BJ (cell line): ENCODE measurements at regions of chr4 and their contacts with region 1.

Region 1: DNA sequence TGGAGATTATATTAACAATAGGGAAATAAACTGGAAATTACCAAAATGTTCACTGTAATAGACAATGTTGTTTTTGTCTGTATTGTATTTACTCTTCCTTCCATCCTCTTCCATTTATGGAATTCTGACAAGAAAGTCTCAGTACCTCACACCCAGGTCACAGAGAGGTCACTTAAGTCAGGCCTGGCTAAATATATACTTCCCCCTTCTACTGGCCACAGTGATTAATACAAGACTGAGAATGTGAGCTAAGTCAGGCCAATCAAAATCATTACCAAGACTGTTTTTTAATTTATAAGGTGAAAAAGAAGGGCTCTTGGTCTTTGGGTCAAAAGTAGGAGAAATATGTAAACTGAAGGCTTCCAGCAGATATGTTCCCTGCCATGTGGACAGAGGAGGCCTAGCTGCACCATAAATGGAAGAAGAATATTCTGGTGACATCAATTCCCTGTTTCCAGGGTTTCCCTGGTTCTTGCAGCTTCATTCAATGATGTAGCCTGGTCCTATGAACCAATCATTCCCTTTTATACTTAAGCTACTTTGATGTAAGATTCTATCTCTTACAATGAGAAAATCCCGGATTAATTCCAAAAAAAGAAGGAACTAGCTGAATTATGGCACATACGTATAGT is 64.3 kb downstream of the LRBA start:
- DNase-seq: no peak
- H3K4me3 ChIP-seq: no peak overlapping the region
- H3K27me3 ChIP-seq: no peaks in the 10 kb centered on the region
- CTCF ChIP-seq: no peak

Region 2: DNA sequence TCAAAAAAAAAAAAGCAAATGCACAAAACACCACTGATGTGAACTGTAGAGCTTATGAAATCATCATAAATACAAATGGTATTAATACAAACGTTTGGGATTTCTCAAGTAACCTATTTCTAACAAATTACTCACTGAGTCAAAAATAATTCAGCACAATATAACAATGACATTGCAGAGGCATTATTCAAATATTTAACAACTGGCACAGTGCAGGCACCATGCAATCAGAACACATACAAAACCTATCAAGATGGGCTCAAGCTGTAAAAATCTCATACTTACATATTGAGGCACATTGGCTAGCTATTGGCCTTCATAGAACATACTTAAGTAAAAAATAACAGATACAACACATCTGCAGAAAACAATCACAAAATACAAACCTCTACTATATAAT is 16.8 kb before region 1 on chr4:
- CTCF ChIA-PET with region 1: no interaction called
- POLR2A ChIA-PET with region 1: interaction called, 12 read pairs
- DNase-seq: no peak
- H3K4me3 ChIP-seq: no peak overlapping the region
- H3K27me3 ChIP-seq: no peaks in the 10 kb centered on the region
- CTCF ChIP-seq: no peak

Region 3: GRCh38 chr4:151012836-151013235 is 62.1 kb after region 1 on chr4:
- CTCF ChIA-PET with region 1: no interaction called
- POLR2A ChIA-PET with region 1: no interaction called
- DNase-seq: no peak
- H3K4me3 ChIP-seq: no peak overlapping the region
- H3K27me3 ChIP-seq: no peaks in the 10 kb centered on the region
- CTCF ChIP-seq: no peak